HepG2 (cell line): ENCODE measurements at regions of chr19 and their contacts with region 1.

Region 1: DNA sequence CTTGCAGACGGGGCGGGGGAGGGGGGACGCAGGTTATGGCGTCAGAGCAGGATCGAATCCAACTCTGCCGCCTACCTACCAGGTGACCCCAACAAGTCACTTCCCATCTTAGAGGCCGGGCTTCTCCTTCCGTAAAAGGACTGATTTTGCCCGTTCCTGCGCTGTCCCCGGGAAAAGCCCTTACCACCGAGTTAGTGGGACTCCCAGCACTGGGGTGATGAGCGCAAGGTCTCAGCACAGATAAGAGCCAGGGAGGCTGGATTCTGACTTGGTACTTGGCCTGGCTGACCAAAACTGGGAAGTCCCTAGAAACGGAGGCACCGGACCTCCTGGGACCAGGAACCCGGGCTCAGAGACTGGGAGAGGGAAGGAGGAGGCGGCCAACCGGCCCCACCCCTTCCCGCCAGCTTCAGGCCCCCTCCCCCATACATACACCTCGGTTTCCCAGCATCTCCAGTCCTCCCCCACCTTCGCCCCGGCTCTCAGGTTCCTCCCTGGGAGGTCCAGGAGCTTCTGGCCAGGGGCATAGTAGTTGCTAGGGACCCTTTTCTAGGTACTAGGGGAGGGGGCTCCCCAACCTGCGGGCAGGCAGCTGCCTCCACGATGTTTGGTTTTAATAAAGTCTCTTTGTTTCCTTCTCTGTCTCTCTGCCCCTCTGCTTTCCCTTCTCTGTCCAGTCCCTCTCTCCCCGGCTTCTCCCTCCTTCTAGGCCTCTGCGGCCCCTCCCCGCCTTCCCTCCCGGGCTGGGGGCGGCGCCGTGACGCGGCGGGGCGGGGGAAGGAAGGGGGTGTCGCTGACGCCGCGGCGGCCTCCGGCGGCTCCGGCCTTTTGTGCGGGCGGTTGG is at the start of gene GRAMD1A:
- DNase-seq: peak; percentile 81
- ATAC-seq: peak; percentile 10; the same call in 2 of the 3 replicates
- H3K4me3 ChIP-seq: peak within 1 kb of the TSS; percentile 81 to 86 (median 81)
- H3K27ac ChIP-seq: peak within 1 kb of the TSS; percentile 83
- H3K4me1 ChIP-seq: peaks cover 81% of the 10 kb centered on the region
- H3K27me3 ChIP-seq: no peaks in the 10 kb centered on the region; a peak in 1 of 5 replicates
- CTCF ChIP-seq: no peak
- EP300 ChIP-seq: 0 out of 4 replicates have a peak, but pooled peaks of 1 of the 2 experiments have one; percentile 16
- POLR2A ChIP-seq: peak in 1 of 2 experiments; percentile 64; a peak in 3 of 4 replicates
- RAD21 ChIP-seq: no peak
- total RNA-seq, gene GRAMD1A: 8.0 and 14.7 TPM in 2 replicates

Region 2: DNA sequence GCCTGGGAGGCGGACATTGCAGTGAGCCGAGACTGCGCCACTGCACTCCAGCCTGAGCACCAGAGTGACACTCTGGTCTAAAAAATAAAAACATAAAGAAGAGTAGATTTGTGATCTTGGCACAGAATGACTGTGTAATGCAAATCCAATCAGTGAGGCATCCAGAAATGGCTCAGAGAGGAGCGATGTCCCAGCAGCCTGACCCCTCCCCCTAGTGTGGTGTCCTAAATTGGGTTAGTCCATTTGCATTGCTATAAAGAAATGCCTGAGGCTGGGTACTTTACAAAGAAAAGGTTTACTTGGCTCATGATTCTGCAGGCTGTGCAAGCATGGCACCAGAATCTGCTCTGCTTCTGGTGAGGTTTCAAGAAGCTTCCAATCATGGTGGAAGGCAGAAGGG is 132.1 kb before region 1 on chr19:
- CTCF ChIA-PET with region 1: no interaction called
- POLR2A ChIA-PET with region 1: no interaction called
- in situ Hi-C with region 1: no loop called
- intact Hi-C with region 1: no loop called
- DNase-seq: no peak
- ATAC-seq: no peak
- H3K4me3 ChIP-seq: no peak overlapping the region
- H3K27ac ChIP-seq: no peak overlapping the region
- H3K4me1 ChIP-seq: no peaks in the 10 kb centered on the region
- H3K27me3 ChIP-seq: peaks cover 0 to 10% of the 10 kb centered on the region in 2 experiments; a peak in 1 of 5 replicates
- CTCF ChIP-seq: no peak
- EP300 ChIP-seq: no peak
- POLR2A ChIP-seq: no peak
- RAD21 ChIP-seq: no peak

Region 3: GRCh38 chr19:34926685-34927375 is 72.9 kb before region 1 on chr19 and contains the start of gene ZNF30:
- CTCF ChIA-PET with region 1: no interaction called
- POLR2A ChIA-PET with region 1: interaction called, 10 read pairs
- in situ Hi-C with region 1: no loop called
- intact Hi-C with region 1: no loop called
- DNase-seq: peak; percentile 85
- ATAC-seq: peak; percentile 100
- H3K4me3 ChIP-seq: peak within 1 kb of the TSS; percentile 63 to 77 (median 65)
- H3K27ac ChIP-seq: peak within 1 kb of the TSS; percentile 78
- H3K4me1 ChIP-seq: peaks cover 15% of the 10 kb centered on the region
- H3K27me3 ChIP-seq: no peaks in the 10 kb centered on the region
- CTCF ChIP-seq: 0 out of 2 replicates have a peak, but pooled peaks have one; percentile 21
- EP300 ChIP-seq: no peak
- POLR2A ChIP-seq: peak; percentile 75 to 82
- RAD21 ChIP-seq: no peak; the same call in 1 of the 2 replicates
- total RNA-seq, gene ZNF30: 4.4 and 6.2 TPM in 2 replicates

Region 4: DNA sequence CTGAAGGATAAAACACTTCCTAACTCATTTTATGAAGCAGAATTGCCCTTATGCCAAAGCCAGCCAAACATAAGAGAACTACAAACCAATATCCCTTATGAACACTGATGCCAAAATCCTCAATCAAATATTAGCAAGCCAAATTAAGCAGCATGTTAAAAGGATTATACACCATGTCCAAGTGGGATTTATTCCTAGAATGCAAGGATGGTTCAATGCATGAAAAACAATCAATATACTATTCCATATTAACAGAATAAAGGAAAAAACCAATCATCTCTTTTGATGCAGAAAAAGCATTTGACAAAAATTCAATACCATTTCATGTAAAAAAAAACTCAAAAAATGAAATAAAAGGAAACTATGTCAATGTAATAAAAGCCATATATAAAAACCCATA is 46.6 kb before region 1 on chr19:
- CTCF ChIA-PET with region 1: no interaction called
- POLR2A ChIA-PET with region 1: no interaction called
- in situ Hi-C with region 1: no loop called
- intact Hi-C with region 1: no loop called
- DNase-seq: no peak
- ATAC-seq: no peak
- H3K4me3 ChIP-seq: no peak overlapping the region
- H3K27ac ChIP-seq: no peak overlapping the region
- H3K4me1 ChIP-seq: no peaks in the 10 kb centered on the region
- H3K27me3 ChIP-seq: no peaks in the 10 kb centered on the region
- CTCF ChIP-seq: no peak
- EP300 ChIP-seq: no peak
- POLR2A ChIP-seq: no peak
- RAD21 ChIP-seq: no peak

Region 5: GRCh38 chr19:35124098-35125060 is 124.7 kb after region 1 on chr19:
- CTCF ChIA-PET with region 1: no interaction called
- POLR2A ChIA-PET with region 1: no interaction called
- in situ Hi-C with region 1: no loop called
- intact Hi-C with region 1: no loop called
- DNase-seq: no peak
- ATAC-seq: no peak
- H3K4me3 ChIP-seq: no peak overlapping the region
- H3K27ac ChIP-seq: no peak overlapping the region
- H3K4me1 ChIP-seq: peaks cover 88% of the 10 kb centered on the region
- H3K27me3 ChIP-seq: no peaks in the 10 kb centered on the region
- CTCF ChIP-seq: no peak
- EP300 ChIP-seq: no peak
- POLR2A ChIP-seq: no peak
- RAD21 ChIP-seq: no peak